ENCODE measurements at regions of chr6 and their contacts with region 1.

Region 1: DNA sequence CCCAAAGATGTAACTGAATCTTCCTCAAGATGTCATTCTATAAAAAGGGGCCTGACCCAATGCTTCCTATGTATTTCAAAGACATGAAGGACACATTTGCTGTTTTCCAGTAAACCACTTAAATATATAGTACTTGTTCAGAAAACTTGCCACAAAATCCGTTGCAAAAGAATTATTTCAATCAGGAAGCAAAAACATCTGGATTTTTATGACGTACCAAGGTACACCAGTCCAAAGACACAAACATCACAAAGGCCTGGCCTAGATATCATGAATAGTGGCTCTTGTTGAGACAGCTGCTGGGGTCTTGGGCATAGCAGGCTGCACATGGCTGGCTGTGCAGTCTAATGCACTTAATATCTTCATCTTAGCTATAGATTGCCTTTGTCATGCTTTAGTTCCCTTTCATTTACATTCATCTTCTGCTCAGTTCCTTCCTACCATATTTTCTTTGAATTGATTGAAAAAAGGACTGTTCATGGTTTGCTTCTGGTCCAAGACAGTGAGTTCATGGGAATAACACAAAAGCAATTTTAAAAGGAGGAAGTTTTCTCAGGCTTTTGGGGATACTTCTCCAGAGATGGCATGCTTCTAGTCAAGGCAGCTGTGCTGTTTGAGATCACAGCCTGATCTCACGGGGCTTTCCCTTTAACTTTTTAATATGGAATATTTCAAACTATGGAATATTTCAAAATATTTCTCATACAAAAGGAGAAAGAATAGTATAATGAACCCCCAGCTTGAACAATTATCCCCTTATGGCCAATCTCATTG is 44.5 kb downstream of the MYLIP start:
- DNase-seq: no peak
- ATAC-seq: no peak
- H3K4me3 ChIP-seq: no peak overlapping the region
- H3K27ac ChIP-seq: no peak overlapping the region
- H3K4me1 ChIP-seq: no peaks in the 10 kb centered on the region
- H3K27me3 ChIP-seq: no peaks in the 10 kb centered on the region

Region 2: DNA sequence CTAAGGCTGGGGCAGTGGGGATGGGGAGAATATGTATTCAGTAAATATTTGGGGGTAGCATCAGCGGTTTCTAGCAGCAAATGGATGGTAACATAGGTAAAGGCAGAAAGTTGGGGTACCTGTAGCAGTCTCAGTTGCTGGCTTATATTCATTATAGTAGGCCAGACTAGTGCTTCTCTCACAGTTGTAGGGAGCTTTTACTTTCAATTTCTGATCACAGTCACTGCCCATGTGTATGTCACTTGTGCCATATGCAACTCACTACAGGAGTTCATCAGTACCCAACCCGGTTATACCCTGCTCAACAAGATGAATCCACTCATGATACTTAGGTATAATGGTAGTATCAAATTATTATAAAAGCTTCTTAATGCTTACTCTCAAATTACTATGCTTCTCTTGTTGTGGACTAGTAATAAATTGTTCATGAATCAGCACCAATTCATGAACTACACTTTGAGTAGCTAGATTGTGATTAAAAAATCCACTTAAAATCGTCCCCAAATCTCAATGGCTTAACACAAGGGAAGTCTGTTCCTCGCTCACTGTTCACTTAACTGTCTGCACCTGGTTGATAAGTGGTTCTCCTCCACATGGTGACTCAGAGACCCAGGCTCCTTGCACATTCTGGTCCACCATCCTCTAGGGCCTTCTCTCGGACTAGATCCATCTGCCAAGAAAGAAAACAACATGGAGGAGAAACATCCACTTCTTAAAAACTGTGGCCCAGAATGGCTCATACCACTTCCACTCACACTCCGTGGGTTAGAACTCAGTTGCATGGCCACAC is 75.8 kb before region 1 on chr6:
- intact Hi-C with region 1: loop called in 1 of 2 experiments (anchors 2 kb)
- DNase-seq: no peak
- ATAC-seq: no peak
- H3K4me3 ChIP-seq: no peak overlapping the region
- H3K27ac ChIP-seq: no peak overlapping the region
- H3K4me1 ChIP-seq: no peaks in the 10 kb centered on the region
- H3K27me3 ChIP-seq: no peaks in the 10 kb centered on the region

Region 3: GRCh38 chr6:16124198-16125180 is 48.9 kb before region 1 on chr6:
- intact Hi-C with region 1: no loop called
- DNase-seq: no peak
- ATAC-seq: no peak
- H3K4me3 ChIP-seq: no peak overlapping the region
- H3K27ac ChIP-seq: no peak overlapping the region
- H3K4me1 ChIP-seq: no peaks in the 10 kb centered on the region
- H3K27me3 ChIP-seq: peaks cover 0 to 2% of the 10 kb centered on the region in 2 donors

Measured in aorta (tissue), 5 donors.